Heart right ventricle (tissue), 16 donors: ENCODE measurements at regions of chr7 and their contacts with region 1.

Region 1: GRCh38 chr7:98831641-98832221 is 38.1 kb downstream of the TMEM130 start:
- DNase-seq: peak in 1 of 2 donors; percentile 17
- ATAC-seq: no peak
- H3K4me3 ChIP-seq: no peak overlapping the region
- H3K27ac ChIP-seq: peak overlapping the region in 2 of 10 donors; percentile 17 to 22
- H3K4me1 ChIP-seq: peaks cover 0 to 8% (median 0%) of the 10 kb centered on the region in 9 donors
- H3K27me3 ChIP-seq: peaks cover 0 to 14% (median 0%) of the 10 kb centered on the region in 7 donors
- CTCF ChIP-seq: peak in 8 of 9 donors; percentile 14 to 68 (median 46)

Region 2: DNA sequence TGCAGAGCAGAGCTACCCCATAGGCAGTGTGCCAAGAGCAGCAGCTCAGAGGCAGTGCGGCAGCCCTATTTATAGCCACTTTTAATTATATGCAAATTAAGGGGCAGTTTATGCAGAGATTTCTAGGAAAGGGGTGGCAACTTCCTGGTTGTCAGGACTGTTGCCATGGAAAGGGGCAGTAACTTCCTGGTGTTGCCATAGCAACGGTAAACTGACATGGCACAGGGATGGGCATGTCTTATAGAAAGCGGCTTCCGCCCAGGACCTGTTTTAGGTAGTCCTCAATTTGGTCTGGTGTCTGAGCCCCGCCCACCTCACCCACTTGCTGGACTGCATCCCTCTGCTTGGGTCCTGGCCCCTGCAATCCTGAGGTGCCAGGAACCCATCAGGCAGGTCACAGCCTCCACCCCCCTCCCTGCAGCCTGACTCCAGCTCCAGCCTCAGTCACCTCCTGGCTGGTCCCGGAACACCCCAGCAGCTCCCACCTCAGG is 77.7 kb before region 1 on chr7:
- intact Hi-C with region 1: loop called in 6 of 10 experiments (anchors 1 to 5 kb)
- DNase-seq: no peak
- ATAC-seq: peak in 4 of 8 donors; percentile 25 to 43 (median 34)
- H3K4me3 ChIP-seq: no peak overlapping the region
- H3K27ac ChIP-seq: no peak overlapping the region
- H3K4me1 ChIP-seq: no peaks in the 10 kb centered on the region
- H3K27me3 ChIP-seq: peaks cover 0 to 12% (median 0%) of the 10 kb centered on the region in 7 donors
- CTCF ChIP-seq: no peak